AG04449 (cell line): ENCODE measurements at regions of chr6 and their contacts with region 1.

Region 1: GRCh38 chr6:116648156-116648555 is 20.4 kb downstream of the ZUP1 start:
- DNase-seq: peak; percentile 26
- H3K4me3 ChIP-seq: no peak overlapping the region
- CTCF ChIP-seq: no peak

Region 2: GRCh38 chr6:116633685-116634084 is 14.5 kb before region 1 on chr6:
- CTCF ChIA-PET with region 1: interaction called, 12 read pairs
- POLR2A ChIA-PET with region 1: no interaction called
- DNase-seq: no peak
- H3K4me3 ChIP-seq: no peak overlapping the region
- CTCF ChIP-seq: no peak

Region 3: DNA sequence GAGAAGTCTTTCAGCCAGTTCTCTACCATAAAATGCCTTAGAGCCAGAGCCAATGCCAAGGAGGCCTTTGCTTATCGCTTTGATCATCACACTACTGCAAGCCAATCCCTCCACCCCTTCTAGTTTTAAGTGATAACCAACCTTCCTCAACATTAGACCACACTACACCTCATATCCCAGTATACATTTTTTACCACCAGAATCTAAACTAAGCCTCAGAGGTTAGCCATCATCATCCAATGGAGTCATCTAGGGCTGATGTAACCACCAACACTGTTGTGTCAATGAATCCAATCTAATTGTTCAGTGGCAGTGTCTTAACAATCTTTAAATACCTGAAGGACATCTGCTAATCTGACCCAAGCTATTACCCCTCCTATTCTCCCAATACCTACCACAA is 14.0 kb after region 1 on chr6:
- CTCF ChIA-PET with region 1: interaction called, 21 read pairs
- POLR2A ChIA-PET with region 1: no interaction called
- DNase-seq: no peak
- H3K4me3 ChIP-seq: no peak overlapping the region
- CTCF ChIP-seq: no peak